Caco-2 (cell line): ENCODE measurements at regions of chr11 and their contacts with region 1.

Region 1: DNA sequence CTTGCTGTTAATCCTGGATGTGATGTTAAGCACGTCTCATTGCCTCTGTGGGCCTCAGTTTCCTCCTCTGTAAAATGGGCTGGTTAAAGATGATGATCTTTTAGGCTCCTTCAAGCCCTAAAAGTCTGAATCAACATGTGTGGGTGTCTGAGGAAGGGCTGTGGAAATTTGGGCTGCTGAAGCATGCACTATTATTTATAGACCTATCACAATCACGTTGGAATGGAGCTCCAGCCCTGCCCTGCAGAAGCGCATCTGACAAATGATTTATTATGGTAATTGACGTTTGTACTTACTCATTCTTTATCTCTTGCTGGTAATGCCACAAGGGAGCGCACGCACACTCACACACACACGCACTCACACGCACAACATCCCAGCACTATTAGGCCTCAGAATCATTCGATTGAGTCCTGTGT is 20.4 kb downstream of the P2RX3 start:
- DNase-seq: no peak
- H3K4me3 ChIP-seq: no peak overlapping the region
- H3K4me3 Mint-ChIP-seq: no peak overlapping the region
- H3K27ac Mint-ChIP-seq: peak overlapping the region; percentile 74
- H3K4me1 ChIP-seq: peaks cover 40% of the 10 kb centered on the region
- H3K4me1 Mint-ChIP-seq: peaks cover 27% of the 10 kb centered on the region
- H3K27me3 ChIP-seq: no peaks in the 10 kb centered on the region
- H3K27me3 Mint-ChIP-seq: no peaks in the 10 kb centered on the region
- CTCF ChIP-seq: no peak

Region 2: GRCh38 chr11:57432714-57433163 is 74.2 kb after region 1 on chr11:
- CTCF ChIA-PET with region 1: no interaction called
- POLR2A ChIA-PET with region 1: no interaction called
- intact Hi-C with region 1: loop called (anchors 5 kb)
- DNase-seq: no peak
- H3K4me3 ChIP-seq: no peak overlapping the region
- H3K4me3 Mint-ChIP-seq: no peak overlapping the region
- H3K27ac Mint-ChIP-seq: no peak overlapping the region
- H3K4me1 ChIP-seq: 0 out of 2 replicates have a peak, but pooled peaks cover 4% of the 10 kb centered on the region
- H3K4me1 Mint-ChIP-seq: peaks cover 10% of the 10 kb centered on the region
- H3K27me3 ChIP-seq: no peaks in the 10 kb centered on the region; the same call in 1 of the 2 replicates
- H3K27me3 Mint-ChIP-seq: peaks cover 2% of the 10 kb centered on the region
- CTCF ChIP-seq: no peak